B cell (primary cell): ENCODE measurements at regions of chr2 and their contacts with region 1.

Region 1: DNA sequence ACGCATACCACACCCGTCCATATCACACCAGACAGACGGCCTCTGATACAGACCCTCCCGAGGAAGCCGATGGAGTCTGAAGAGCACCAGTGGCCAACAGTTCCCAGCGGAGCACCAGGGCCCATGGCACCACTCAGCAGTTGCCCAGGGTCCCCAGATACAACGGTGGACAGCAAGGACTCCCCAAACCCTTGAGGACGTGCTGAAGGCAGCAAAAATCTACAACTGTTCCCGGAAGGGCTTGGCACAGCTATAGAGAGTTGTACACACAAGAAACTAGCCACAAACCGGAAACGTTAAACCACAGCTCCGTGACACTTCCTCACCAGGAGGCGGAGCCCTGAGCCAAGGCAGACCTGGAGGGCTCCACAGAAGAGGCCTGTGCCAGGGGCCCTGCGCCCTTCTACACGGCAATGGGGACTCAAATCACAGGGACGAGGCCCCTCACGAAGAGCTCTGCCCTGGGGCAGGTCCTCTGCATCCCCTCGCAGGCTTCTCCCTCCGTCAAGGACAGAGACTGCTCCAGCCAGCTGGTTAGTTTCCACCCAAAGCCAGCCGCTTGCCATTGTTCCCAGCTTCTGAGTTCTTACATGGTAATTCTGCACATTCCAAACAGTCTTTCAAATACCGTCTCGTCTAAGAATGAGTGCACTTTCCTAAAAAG is 133.4 kb downstream of the HDAC4 start:
- DNase-seq: peak; percentile 91
- ATAC-seq: peak; percentile 95
- H3K4me3 ChIP-seq: peak overlapping the region; percentile 4 to 79 (median 26)
- H3K4me3 Mint-ChIP-seq: peak overlapping the region; percentile 87
- H3K27ac ChIP-seq: no peak overlapping the region
- H3K27ac Mint-ChIP-seq: peak overlapping the region; percentile 79
- H3K4me1 ChIP-seq: peaks cover 55 to 62% of the 10 kb centered on the region in 2 donors
- H3K4me1 Mint-ChIP-seq: peaks cover 56% of the 10 kb centered on the region
- H3K27me3 ChIP-seq: peaks cover 0 to 92% (median 36%) of the 10 kb centered on the region in 4 experiments
- H3K27me3 Mint-ChIP-seq: peaks cover 60% of the 10 kb centered on the region
- CTCF ChIP-seq: peak; percentile 73

Region 2: GRCh38 chr2:239252801-239253200 is 14.6 kb before region 1 on chr2:
- CTCF ChIA-PET with region 1: interaction called, 5 read pairs
- POLR2A ChIA-PET with region 1: interaction called, 3 read pairs
- intact Hi-C with region 1: loop called (anchors 1 kb)
- DNase-seq: no peak
- ATAC-seq: peak; percentile 19
- H3K4me3 ChIP-seq: peak overlapping the region in 4 of 5 experiments; percentile 15 to 36 (median 34)
- H3K4me3 Mint-ChIP-seq: peak overlapping the region; percentile 84
- H3K27ac ChIP-seq: no peak overlapping the region
- H3K27ac Mint-ChIP-seq: no peak overlapping the region
- H3K4me1 ChIP-seq: peaks cover 32 to 41% of the 10 kb centered on the region in 2 donors
- H3K4me1 Mint-ChIP-seq: peaks cover 49% of the 10 kb centered on the region
- H3K27me3 ChIP-seq: peaks cover 0 to 56% (median 16%) of the 10 kb centered on the region in 4 experiments
- H3K27me3 Mint-ChIP-seq: peaks cover 25% of the 10 kb centered on the region
- CTCF ChIP-seq: no peak

Region 3: GRCh38 chr2:239369631-239370161 is 102.3 kb after region 1 on chr2:
- CTCF ChIA-PET with region 1: interaction called, 8 read pairs
- POLR2A ChIA-PET with region 1: no interaction called
- intact Hi-C with region 1: loop called (anchors 1 kb)
- DNase-seq: peak; percentile 95
- ATAC-seq: peak; percentile 90
- H3K4me3 ChIP-seq: peak overlapping the region in 4 of 5 experiments; percentile 30 to 57 (median 40)
- H3K4me3 Mint-ChIP-seq: peak overlapping the region; percentile 80
- H3K27ac ChIP-seq: peak overlapping the region; percentile 90 to 91
- H3K27ac Mint-ChIP-seq: peak overlapping the region; percentile 88
- H3K4me1 ChIP-seq: peaks cover 20 to 32% of the 10 kb centered on the region in 2 donors
- H3K4me1 Mint-ChIP-seq: peaks cover 15% of the 10 kb centered on the region
- H3K27me3 ChIP-seq: no peaks in the 10 kb centered on the region
- H3K27me3 Mint-ChIP-seq: no peaks in the 10 kb centered on the region
- CTCF ChIP-seq: no peak

Region 4: DNA sequence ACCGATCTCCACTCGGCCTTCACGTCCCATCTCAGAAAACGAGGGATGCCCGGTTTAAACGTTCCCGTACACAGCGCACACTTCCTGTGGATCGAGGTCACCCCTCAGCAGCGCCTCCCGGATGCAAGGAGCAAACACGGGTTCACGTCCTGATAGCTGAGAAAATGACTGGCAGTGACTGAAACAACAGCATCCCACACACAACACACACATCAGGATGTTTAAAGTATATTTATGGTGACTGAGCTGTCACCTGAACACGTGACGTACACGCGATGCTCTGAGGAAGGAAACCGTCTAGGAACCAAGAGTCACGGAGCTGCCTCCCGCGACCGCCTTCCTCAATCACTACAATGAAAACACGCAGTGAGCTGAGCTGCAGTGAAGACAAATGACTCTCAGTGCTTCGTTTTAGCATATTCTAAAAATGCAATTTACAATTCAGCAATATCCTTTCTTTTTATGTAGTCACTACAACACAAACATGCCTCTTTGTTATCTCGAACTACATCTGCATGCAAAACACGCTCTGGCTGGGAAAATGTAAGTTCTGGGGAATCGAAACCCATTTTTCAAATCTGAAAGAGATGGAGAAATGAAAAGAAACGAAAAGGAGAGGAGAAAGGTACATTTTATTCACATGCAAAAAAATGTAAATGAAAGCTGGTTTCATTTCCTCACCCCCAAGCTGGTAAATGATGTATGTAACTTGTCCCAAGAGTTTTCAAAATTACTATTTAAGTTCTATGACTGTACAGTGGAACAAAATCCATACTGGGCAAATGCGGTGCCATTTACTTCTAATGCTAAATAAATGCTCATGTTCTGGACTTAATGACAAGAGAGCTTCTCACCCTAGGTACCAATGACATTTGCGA is 113.7 kb after region 1 on chr2:
- CTCF ChIA-PET with region 1: interaction called, 28 read pairs
- POLR2A ChIA-PET with region 1: interaction called, 3 read pairs
- intact Hi-C with region 1: loop called (anchors 5 kb)
- DNase-seq: peak; percentile 90
- ATAC-seq: peak; percentile 57
- H3K4me3 ChIP-seq: peak overlapping the region; percentile 46 to 58 (median 46)
- H3K4me3 Mint-ChIP-seq: peak overlapping the region; percentile 86
- H3K27ac ChIP-seq: peak overlapping the region; percentile 91 to 94
- H3K27ac Mint-ChIP-seq: peak overlapping the region; percentile 90
- H3K4me1 ChIP-seq: peaks cover 19 to 50% of the 10 kb centered on the region in 2 donors
- H3K4me1 Mint-ChIP-seq: peaks cover 45% of the 10 kb centered on the region
- H3K27me3 ChIP-seq: no peaks in the 10 kb centered on the region
- H3K27me3 Mint-ChIP-seq: no peaks in the 10 kb centered on the region
- CTCF ChIP-seq: no peak

Region 5: GRCh38 chr2:239879423-239880084 is 612.1 kb after region 1 on chr2:
- CTCF ChIA-PET with region 1: interaction called, 11 read pairs
- POLR2A ChIA-PET with region 1: no interaction called
- intact Hi-C with region 1: no loop called
- DNase-seq: no peak
- ATAC-seq: no peak
- H3K4me3 ChIP-seq: no peak overlapping the region
- H3K4me3 Mint-ChIP-seq: no peak overlapping the region
- H3K27ac ChIP-seq: no peak overlapping the region
- H3K27ac Mint-ChIP-seq: no peak overlapping the region
- H3K4me1 ChIP-seq: peaks cover 0 to 4% of the 10 kb centered on the region in 2 donors
- H3K4me1 Mint-ChIP-seq: peaks cover 11% of the 10 kb centered on the region
- H3K27me3 ChIP-seq: peaks cover 0 to 23% (median 7%) of the 10 kb centered on the region in 4 experiments
- H3K27me3 Mint-ChIP-seq: peaks cover 21% of the 10 kb centered on the region
- CTCF ChIP-seq: no peak

Region 6: GRCh38 chr2:239991689-239992314 is 724.4 kb after region 1 on chr2:
- CTCF ChIA-PET with region 1: interaction called, 15 read pairs
- POLR2A ChIA-PET with region 1: no interaction called
- intact Hi-C with region 1: no loop called
- DNase-seq: peak; percentile 65
- ATAC-seq: peak; percentile 54
- H3K4me3 ChIP-seq: no peak overlapping the region
- H3K4me3 Mint-ChIP-seq: no peak overlapping the region
- H3K27ac ChIP-seq: no peak overlapping the region
- H3K27ac Mint-ChIP-seq: no peak overlapping the region
- H3K4me1 ChIP-seq: no peaks in the 10 kb centered on the region
- H3K4me1 Mint-ChIP-seq: no peaks in the 10 kb centered on the region
- H3K27me3 ChIP-seq: no peaks in the 10 kb centered on the region
- H3K27me3 Mint-ChIP-seq: no peaks in the 10 kb centered on the region
- CTCF ChIP-seq: peak; percentile 98